CD8-positive, alpha-beta T cell (primary cell): ENCODE measurements at regions of chr10 and their contacts with region 1.

Region 1: DNA sequence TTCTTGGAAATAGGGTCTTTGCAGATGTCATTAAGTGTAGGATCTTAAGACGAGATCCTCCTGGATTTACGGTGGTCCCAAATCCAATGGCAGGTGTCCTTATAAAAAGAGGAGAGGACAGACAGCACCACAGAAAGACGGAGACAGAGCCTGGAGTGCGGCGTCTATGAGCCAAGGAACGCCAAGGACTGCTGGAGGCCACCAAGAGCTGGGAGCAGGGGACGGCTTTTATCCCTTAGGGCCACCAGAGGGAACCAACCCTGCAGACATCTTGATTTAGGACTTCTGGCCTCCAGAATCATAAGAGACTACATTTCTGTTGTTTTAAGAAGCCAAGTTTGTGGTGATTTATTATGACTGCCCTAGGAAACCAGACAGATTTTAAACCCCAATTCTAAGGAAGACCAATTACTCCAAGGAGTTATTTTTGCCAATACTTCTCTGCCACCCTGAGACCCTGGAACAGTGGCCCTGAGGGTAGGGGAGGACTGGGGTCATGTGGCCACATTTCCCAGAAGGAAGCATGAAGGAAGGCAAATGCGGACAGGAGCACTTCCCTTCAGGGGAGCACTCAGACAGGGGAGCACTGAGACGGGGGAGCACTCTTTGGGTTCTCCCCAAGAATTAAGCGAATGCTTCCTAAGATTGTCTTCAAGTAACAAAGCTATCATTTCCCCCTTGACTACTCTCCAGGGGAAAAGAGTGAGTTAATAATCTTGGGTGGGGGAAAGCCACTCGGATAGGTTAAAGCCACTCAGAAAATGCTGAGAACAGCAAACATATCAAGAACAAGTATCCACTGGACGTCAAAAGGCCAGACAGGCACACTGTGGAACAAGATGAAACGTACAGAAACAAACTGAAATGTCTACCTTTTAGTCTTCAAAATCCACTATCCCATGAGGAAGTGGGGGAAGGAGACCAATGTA is 67.5 kb downstream of the CHST15 start:
- DNase-seq: peak in 1 of 9 experiments; percentile 22
- ATAC-seq: no peak
- H3K4me3 ChIP-seq: no peak overlapping the region
- H3K4me3 Mint-ChIP-seq: no peak overlapping the region
- H3K27ac ChIP-seq: no peak overlapping the region
- H3K27ac Mint-ChIP-seq: peak overlapping the region; percentile 22
- H3K4me1 ChIP-seq: no peaks in the 10 kb centered on the region
- H3K4me1 Mint-ChIP-seq: peaks cover 4% of the 10 kb centered on the region
- H3K27me3 ChIP-seq: no peaks in the 10 kb centered on the region
- H3K27me3 Mint-ChIP-seq: peaks cover 3% of the 10 kb centered on the region
- CTCF ChIP-seq: no peak

Region 2: DNA sequence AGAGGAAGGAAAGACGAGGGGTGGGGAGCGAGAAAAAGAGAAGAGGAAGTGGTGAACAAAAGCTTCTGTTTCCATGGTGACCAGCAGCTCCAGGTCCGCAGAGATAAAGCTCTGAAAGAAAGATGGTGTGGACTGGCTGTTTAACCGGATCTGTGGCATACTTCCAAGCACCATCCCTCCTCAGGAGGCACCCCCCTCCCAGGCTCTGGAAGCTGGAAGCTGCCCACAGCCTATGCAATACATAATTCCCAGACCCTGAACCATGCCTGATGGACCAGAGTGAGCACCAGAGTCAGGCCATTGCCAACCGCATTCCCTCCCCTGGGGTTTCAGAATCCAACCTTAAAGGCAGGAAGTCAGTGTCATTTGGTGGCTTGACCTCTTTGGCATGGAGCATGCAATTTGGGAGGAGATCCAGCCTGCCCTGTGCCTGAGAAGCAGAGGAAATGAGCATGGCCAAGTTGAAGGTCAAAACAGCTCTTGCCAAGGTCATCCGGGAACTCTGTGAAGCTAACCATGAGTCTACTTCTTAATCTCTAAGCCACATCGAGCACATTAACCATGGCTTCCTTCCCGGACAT is 112.1 kb before region 1 on chr10:
- CTCF ChIA-PET with region 1: no interaction called
- POLR2A ChIA-PET with region 1: no interaction called
- intact Hi-C with region 1: no loop called
- DNase-seq: peak in 3 of 9 experiments; percentile 11 to 43 (median 31)
- ATAC-seq: no peak
- H3K4me3 ChIP-seq: no peak overlapping the region
- H3K4me3 Mint-ChIP-seq: no peak overlapping the region
- H3K27ac ChIP-seq: no peak overlapping the region
- H3K27ac Mint-ChIP-seq: no peak overlapping the region
- H3K4me1 ChIP-seq: peaks cover 18% of the 10 kb centered on the region
- H3K4me1 Mint-ChIP-seq: peaks cover 3% of the 10 kb centered on the region
- H3K27me3 ChIP-seq: no peaks in the 10 kb centered on the region
- H3K27me3 Mint-ChIP-seq: peaks cover 23% of the 10 kb centered on the region
- CTCF ChIP-seq: no peak

Region 3: DNA sequence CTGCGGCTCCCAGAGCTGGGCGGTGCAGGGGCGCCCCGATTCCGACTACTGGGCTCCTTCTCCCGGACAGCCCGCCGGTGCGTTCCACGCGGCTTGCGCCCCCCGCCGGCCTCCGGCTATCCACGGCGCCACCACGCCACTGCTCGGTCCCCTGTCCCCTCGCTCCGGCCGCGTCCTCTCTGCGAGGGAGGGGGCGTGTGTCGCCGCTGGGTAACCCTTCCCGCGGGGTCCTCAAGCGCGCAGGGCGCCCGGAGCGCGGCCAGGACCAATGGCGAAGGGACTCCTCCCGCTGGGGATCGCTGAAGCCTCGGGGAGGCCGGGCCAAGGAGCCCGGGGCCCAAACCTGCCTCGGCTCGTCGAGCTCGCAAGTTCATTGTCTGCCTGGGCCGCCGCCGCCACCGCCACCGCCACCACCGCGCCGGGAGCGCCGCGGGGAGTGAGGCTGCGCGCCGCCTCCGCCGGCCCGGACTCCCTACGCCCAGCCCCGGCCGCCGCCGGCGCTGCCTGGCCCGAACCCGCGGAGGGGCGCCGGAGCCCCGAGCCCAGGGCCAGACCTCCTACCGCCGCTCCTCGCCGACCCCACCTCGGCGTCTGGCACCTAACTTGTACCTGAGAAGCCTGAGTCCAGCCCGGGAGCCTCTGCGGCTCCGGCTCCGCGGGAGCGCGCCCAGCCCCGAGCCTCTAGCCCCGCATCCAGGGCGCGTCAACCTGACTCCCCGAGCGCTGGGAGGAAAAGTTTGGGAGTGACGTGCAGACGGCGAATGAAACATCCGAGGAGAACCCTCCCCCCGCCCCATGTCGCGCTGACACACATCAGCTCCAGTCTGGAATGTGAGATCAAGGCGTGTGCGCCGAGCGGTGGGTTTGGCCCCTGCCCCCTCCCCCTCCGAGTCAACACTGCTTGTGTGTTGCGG is 67.2 kb after region 1 on chr10 and contains the start of gene CHST15:
- CTCF ChIA-PET with region 1: no interaction called
- POLR2A ChIA-PET with region 1: no interaction called
- intact Hi-C with region 1: loop called in 1 of 2 experiments (anchors 2 kb)
- DNase-seq: peak in 1 of 9 experiments; percentile 14
- ATAC-seq: peak; percentile 27
- H3K4me3 ChIP-seq: peak within 1 kb of the TSS in 1 of 2 experiments; percentile 24
- H3K4me3 Mint-ChIP-seq: peak within 1 kb of the TSS; percentile 64
- H3K27ac ChIP-seq: no peak within 1 kb of the TSS
- H3K27ac Mint-ChIP-seq: no peak within 1 kb of the TSS
- H3K4me1 ChIP-seq: no peaks in the 10 kb centered on the region
- H3K4me1 Mint-ChIP-seq: peaks cover 7% of the 10 kb centered on the region
- H3K27me3 ChIP-seq: peaks cover 2 to 4% of the 10 kb centered on the region in 2 experiments
- H3K27me3 Mint-ChIP-seq: peaks cover 33% of the 10 kb centered on the region
- CTCF ChIP-seq: no peak
- total RNA-seq, gene CHST15: 0.19 to 0.33 TPM